Naive thymus-derived CD4-positive, alpha-beta T cell (primary cell): ENCODE measurements at regions of chr11 and their contacts with region 1.

Region 1: DNA sequence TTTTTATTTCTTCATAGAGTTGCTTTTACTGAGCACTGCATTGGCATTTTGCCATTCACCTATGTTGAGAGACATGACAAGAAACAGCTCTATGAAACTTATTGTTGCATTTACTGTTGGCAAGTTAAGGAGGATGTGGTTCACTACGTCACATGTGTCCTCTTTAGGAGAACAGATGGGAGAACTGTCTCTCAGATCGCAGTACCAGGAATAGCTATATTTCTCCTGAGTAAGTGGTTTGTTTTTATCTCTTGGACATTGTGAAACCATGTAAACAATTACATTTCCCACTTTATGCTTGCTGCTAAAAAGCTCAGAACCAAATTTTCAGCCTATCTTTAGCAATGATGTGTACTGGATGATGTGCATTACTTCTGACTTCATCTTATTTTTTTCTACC is 34.8 kb upstream of the PSMA1 start:
- DNase-seq: peak in 7 of 9 donors; percentile 76 to 92 (median 87)
- ATAC-seq: peak; percentile 95
- H3K4me3 ChIP-seq: no peak overlapping the region
- H3K4me3 Mint-ChIP-seq: peak overlapping the region in 9 of 10 donors; percentile 42 to 85 (median 65)
- H3K27ac ChIP-seq: peak overlapping the region; percentile 73
- H3K27ac Mint-ChIP-seq: peak overlapping the region; percentile 82 to 99 (median 95)
- H3K4me1 ChIP-seq: peaks cover 19 to 23% of the 10 kb centered on the region in 2 donors
- H3K4me1 Mint-ChIP-seq: peaks cover 23 to 72% (median 60%) of the 10 kb centered on the region in 7 donors
- H3K27me3 ChIP-seq: no peaks in the 10 kb centered on the region
- H3K27me3 Mint-ChIP-seq: no peaks in the 10 kb centered on the region

Region 2: GRCh38 chr11:14331476-14332136 is 223.4 kb before region 1 on chr11:
- CTCF ChIA-PET with region 1: no interaction called
- POLR2A ChIA-PET with region 1: no interaction called
- intact Hi-C with region 1: no loop called
- DNase-seq: no peak
- ATAC-seq: no peak
- H3K4me3 ChIP-seq: no peak overlapping the region
- H3K4me3 Mint-ChIP-seq: no peak overlapping the region
- H3K27ac ChIP-seq: no peak overlapping the region
- H3K27ac Mint-ChIP-seq: no peak overlapping the region
- H3K4me1 ChIP-seq: peaks cover 5 to 7% of the 10 kb centered on the region in 2 donors
- H3K4me1 Mint-ChIP-seq: peaks cover 12 to 45% (median 30%) of the 10 kb centered on the region in 7 donors
- H3K27me3 ChIP-seq: no peaks in the 10 kb centered on the region
- H3K27me3 Mint-ChIP-seq: no peaks in the 10 kb centered on the region

Region 3: DNA sequence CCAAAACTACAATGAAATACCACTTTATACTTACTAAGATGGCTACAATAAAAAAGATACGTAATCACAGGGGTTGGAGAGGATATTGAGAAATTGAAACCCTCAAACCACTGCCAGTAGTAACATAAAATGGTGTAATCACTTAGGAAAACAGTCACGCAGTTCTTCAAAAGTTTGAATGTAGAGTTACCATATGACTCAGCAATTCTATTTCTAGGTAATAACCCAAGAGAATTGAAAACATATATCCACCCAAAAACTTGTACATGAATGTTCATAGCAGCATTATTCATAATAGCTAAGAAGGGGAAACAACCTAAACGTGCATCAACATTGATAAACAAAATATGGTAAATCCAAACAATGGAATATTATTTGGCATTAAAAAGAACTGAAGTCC is 10.3 kb before region 1 on chr11:
- CTCF ChIA-PET with region 1: no interaction called
- POLR2A ChIA-PET with region 1: interaction called, 5 read pairs
- intact Hi-C with region 1: loop called (anchors 1 kb)
- DNase-seq: no peak
- ATAC-seq: peak; percentile 54
- H3K4me3 ChIP-seq: no peak overlapping the region
- H3K4me3 Mint-ChIP-seq: peak overlapping the region in 1 of 10 donors; percentile 71
- H3K27ac ChIP-seq: no peak overlapping the region
- H3K27ac Mint-ChIP-seq: peak overlapping the region in 2 of 9 donors; percentile 26 to 84
- H3K4me1 ChIP-seq: peaks cover 0 to 9% of the 10 kb centered on the region in 2 donors
- H3K4me1 Mint-ChIP-seq: peaks cover 13 to 63% (median 32%) of the 10 kb centered on the region in 7 donors
- H3K27me3 ChIP-seq: no peaks in the 10 kb centered on the region
- H3K27me3 Mint-ChIP-seq: no peaks in the 10 kb centered on the region

Region 4: GRCh38 chr11:14566331-14567063 is 11.5 kb after region 1 on chr11:
- CTCF ChIA-PET with region 1: interaction called, 4 read pairs
- POLR2A ChIA-PET with region 1: interaction called, 58 read pairs
- intact Hi-C with region 1: loop called in 1 of 2 experiments (anchors 1 kb)
- DNase-seq: no peak
- ATAC-seq: no peak
- H3K4me3 ChIP-seq: no peak overlapping the region
- H3K4me3 Mint-ChIP-seq: peak overlapping the region in 3 of 10 donors; percentile 26 to 35 (median 29)
- H3K27ac ChIP-seq: no peak overlapping the region
- H3K27ac Mint-ChIP-seq: peak overlapping the region in 8 of 9 donors; percentile 30 to 77 (median 66)
- H3K4me1 ChIP-seq: peaks cover 15 to 28% of the 10 kb centered on the region in 2 donors
- H3K4me1 Mint-ChIP-seq: peaks cover 37 to 83% (median 71%) of the 10 kb centered on the region in 7 donors
- H3K27me3 ChIP-seq: no peaks in the 10 kb centered on the region
- H3K27me3 Mint-ChIP-seq: no peaks in the 10 kb centered on the region

Region 5: GRCh38 chr11:14698771-14699170 is 143.8 kb after region 1 on chr11:
- CTCF ChIA-PET with region 1: no interaction called
- POLR2A ChIA-PET with region 1: no interaction called
- intact Hi-C with region 1: no loop called
- DNase-seq: peak in 2 of 9 donors; percentile 8 to 26
- ATAC-seq: no peak
- H3K4me3 ChIP-seq: no peak overlapping the region
- H3K4me3 Mint-ChIP-seq: peak overlapping the region; percentile 30 to 80 (median 62)
- H3K27ac ChIP-seq: no peak overlapping the region
- H3K27ac Mint-ChIP-seq: peak overlapping the region; percentile 13 to 82 (median 58)
- H3K4me1 ChIP-seq: peaks cover 9 to 30% of the 10 kb centered on the region in 2 donors
- H3K4me1 Mint-ChIP-seq: peaks cover 20 to 74% (median 67%) of the 10 kb centered on the region in 7 donors
- H3K27me3 ChIP-seq: no peaks in the 10 kb centered on the region
- H3K27me3 Mint-ChIP-seq: no peaks in the 10 kb centered on the region